Mucosa of descending colon (tissue), 3 donors: ENCODE measurements at regions of chr5 and their contacts with region 1.

Region 1: DNA sequence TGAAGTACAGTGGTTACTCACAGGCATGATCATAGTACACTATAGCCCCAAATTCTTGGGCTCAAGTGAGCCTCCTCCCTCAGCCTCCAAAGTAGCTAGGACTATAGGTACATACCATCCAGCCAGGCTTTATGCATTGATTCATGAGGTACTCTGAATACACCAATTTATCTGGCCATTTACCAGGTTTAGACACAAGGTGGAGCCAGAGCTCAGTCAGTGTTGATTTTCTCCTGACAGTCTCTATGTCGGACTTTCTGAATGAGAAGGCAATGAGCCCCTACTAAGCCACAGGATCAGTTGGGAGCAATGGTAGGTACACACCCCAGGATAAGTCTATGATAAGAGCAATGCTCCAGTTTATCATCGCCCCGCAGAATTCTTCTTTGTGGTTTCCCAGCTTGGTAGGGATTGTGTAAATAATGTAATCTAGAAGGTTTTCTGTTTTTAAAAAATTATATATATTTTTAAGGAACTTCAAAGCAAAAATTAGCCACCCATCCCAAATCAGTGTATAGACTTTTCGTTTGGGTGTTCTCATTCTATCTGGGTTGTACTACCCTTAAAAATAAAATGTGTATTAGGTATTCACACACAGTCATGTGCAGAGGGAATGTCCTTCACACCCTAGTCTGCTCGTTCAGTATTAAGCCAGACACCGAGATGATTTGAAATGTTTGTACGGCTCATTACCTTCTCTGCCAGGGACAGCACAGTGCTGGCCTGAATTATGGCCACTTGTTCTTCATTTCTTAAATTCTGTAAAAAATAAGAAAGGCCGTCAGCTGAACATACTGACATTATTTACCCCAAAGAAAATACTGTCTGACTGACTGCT is 118.4 kb upstream of the DPYSL3 start:
- DNase-seq: peak in 1 of 3 donors; percentile 90
- ATAC-seq: peak; percentile 87
- H3K4me3 ChIP-seq: no peak overlapping the region
- H3K4me1 ChIP-seq: no peaks in the 10 kb centered on the region
- CTCF ChIP-seq: peak; percentile 56

Region 2: DNA sequence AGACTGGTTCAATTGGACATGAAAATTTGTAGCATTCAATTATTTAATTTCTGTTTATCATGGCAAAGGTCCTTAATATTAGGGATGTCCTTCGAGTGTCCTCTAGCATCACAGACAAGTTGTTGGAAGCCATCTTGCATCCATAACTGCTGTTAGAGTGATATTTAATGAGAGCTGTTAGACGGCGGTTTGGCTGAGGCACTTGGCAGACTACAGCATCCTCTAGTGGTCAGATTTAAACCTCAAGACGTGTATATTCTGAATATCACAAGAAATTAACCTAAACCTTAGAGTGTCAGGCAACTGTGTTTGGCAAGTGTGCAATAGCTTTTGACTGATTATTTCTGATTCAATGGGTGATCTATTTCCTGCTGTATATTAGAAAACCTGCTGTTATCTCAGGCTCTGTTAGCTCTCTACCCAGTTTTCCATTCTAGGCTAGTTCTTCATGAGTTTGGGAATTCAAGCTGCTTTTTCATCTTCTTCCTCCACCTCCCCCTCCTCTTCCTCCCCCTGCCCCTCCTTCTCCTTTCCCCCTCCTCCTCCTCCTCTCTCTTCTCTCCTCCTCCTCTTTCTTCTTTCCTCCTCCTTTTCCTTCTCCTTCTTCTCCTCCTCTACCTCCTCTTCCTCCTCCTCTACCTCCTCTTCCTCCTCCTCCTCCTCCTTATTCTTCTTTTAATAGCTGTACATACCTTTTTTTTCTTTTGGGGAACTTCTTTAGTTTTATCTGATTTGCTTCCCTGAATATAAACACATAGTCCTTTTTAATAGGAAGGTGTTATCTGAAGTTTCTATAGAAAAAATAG is 194.6 kb after region 1 on chr5:
- intact Hi-C with region 1: loop called (anchors 2 kb)
- DNase-seq: peak in 2 of 3 donors; percentile 24 to 62
- ATAC-seq: peak; percentile 89
- H3K4me3 ChIP-seq: no peak overlapping the region
- H3K4me1 ChIP-seq: no peaks in the 10 kb centered on the region
- CTCF ChIP-seq: peak; percentile 54